OCI-LY7 (cell line): ENCODE measurements at regions of chr14 and their contacts with region 1.

Region 1: GRCh38 chr14:105045710-105046326 is 19.4 kb downstream of the GPR132 start:
- DNase-seq: peak; percentile 90
- H3K4me3 ChIP-seq: no peak overlapping the region
- H3K27ac ChIP-seq: no peak overlapping the region
- H3K4me1 ChIP-seq: peaks cover 4% of the 10 kb centered on the region
- CTCF ChIP-seq: peak; percentile 100

Region 2: GRCh38 chr14:104976198-104977007 is 69.4 kb before region 1 on chr14:
- CTCF ChIA-PET with region 1: interaction called, 4 read pairs
- POLR2A ChIA-PET with region 1: no interaction called
- intact Hi-C with region 1: loop called (anchors 1 kb)
- DNase-seq: peak; percentile 75
- H3K4me3 ChIP-seq: no peak overlapping the region
- H3K27ac ChIP-seq: no peak overlapping the region
- H3K4me1 ChIP-seq: no peaks in the 10 kb centered on the region
- CTCF ChIP-seq: peak; percentile 86

Region 3: DNA sequence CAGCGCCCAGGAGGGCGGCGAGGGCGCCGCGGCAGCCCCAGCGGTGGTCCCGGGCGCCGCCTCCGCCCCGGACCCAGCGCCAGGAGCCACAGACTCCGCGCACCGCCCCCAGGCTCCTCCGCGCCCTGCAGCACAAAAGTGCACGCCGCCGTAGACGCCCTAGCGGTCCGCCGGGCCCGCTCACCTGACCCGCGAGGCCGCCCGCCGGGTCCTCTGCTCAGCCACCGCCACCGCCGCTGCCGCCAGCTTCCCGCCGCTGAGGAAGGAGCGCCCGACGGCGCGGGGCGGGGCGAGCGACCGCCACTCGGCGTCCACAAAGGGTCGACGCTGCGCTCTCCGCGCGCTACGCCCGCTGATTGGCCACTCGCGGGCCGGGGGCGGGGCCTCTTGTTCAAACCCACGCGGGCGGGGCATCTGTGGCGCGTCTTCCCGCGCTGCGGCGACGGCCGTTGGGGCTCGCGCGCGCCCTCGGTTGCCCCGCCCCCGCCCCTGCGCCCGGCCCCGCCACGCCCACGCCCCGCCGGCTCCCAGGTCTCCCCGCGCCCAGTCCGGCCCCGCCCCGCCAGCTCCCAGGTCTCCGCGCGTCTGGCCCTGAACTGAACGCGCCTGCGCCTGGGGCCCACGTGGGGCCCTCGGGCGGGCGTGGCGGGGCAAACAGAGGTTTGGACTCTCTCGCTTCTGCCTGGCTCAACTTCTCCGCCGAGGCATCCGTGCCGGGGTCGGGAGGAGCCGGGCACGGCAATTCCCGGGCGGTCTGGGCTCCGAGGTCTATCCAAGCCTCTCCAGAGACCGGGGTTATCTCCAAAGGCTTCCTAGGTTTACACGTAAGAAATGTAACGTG is 24.8 kb before region 1 on chr14 and contains the start of gene CDCA4:
- CTCF ChIA-PET with region 1: no interaction called
- POLR2A ChIA-PET with region 1: no interaction called
- intact Hi-C with region 1: loop called (anchors 2 kb)
- DNase-seq: peak; percentile 99
- H3K4me3 ChIP-seq: peak within 1 kb of the TSS; percentile 85
- H3K27ac ChIP-seq: peak within 1 kb of the TSS; percentile 89
- H3K4me1 ChIP-seq: peaks cover 50% of the 10 kb centered on the region
- CTCF ChIP-seq: 0 out of 2 replicates have a peak, but pooled peaks have one; percentile 8
- total RNA-seq, gene CDCA4: 109 and 110 TPM in 2 replicates